ENCODE measurements at regions of chr15 and their contacts with region 1.

Region 1: DNA sequence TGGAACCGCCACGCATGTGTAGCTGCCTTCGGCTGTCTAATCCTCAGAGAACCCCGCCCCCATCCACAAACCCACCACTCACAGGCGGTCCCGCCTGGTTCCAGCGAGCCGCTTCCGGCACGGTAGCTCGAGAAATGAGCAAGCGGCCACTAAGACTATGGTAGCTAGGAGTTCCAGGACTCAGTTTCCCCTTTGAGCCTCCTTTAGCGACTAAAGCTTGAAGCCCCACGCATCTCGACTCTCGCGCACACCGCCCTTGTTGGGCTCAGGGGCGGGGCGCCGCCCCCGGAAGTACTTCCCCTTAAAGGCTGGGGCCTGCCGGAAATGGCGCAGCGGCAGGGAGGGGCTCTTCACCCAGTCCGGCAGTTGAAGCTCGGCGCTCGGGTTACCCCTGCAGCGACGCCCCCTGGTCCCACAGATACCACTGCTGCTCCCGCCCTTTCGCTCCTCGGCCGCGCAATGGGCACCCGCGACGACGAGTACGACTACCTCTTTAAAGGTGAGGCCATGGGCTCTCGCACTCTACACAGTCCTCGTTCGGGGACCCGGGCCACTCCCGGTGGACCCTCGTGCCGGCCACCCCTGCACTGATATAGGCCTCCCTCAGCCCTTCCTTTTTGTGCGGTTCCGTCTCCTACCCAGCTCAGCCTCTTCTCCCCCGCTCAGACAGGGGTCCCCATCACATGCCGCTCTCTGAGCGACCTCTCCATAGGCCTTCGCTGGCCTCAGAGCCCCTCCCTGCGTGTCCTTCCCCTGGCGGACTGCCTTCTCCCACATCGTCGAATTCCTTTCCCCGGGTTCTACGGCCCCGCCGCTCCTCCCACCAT is at the start of gene RAB11A:
- DNase-seq: peak; percentile 95
- H3K4me3 Mint-ChIP-seq: peak within 1 kb of the TSS; percentile 98
- H3K27ac Mint-ChIP-seq: peak within 1 kb of the TSS; percentile 94
- H3K4me1 Mint-ChIP-seq: peaks cover 33% of the 10 kb centered on the region
- H3K27me3 Mint-ChIP-seq: peaks cover 4% of the 10 kb centered on the region
- total RNA-seq, gene RAB11A: 168 to 169 TPM

Region 2: DNA sequence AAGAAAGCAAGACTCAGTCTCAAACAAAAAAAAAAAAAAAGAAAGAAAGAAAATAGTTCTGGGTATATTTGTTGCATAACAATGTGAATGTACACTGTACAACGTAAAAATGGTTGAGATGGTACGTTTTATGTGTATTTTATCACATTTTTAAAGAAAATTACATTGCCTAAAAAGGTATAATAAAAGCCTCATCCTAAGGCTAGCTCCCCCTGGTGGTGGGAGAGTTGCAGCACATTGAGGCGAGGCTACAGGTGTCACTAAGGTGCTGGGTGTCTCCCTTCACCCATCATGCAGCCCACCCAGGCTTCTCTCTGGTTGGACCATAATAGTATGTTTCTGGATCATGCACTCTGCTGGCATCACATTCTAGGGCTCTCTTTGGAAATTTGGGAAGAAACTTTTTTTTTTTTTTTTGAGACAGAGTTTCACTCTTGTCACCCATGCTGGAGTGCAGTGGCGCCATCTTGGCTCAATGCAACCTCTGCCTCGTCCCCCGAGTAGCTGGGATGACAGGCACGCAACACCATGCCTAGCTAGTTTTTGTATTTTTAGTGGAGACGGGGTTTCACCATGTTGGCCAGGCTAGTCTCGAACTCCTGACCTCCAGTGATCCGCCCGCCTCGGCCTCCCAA is 12.4 kb before region 1 on chr15:
- CTCF ChIA-PET with region 1: interaction called, 16 read pairs
- POLR2A ChIA-PET with region 1: no interaction called
- DNase-seq: peak; percentile 89
- H3K4me3 Mint-ChIP-seq: no peak overlapping the region
- H3K27ac Mint-ChIP-seq: peak overlapping the region; percentile 41
- H3K4me1 Mint-ChIP-seq: peaks cover 12% of the 10 kb centered on the region
- H3K27me3 Mint-ChIP-seq: peaks cover 2% of the 10 kb centered on the region